ENCODE measurements at regions of chr1 and their contacts with region 1.

Region 1: GRCh38 chr1:44775078-44775929 is at the start of gene RPS8:
- DNase-seq: peak; percentile 96
- H3K4me3 Mint-ChIP-seq: peak within 1 kb of the TSS; percentile 91
- H3K27ac Mint-ChIP-seq: peak within 1 kb of the TSS; percentile 99
- H3K4me1 Mint-ChIP-seq: peaks cover 25% of the 10 kb centered on the region
- H3K27me3 Mint-ChIP-seq: no peaks in the 10 kb centered on the region
- CTCF ChIP-seq: no peak
- total RNA-seq, gene RPS8: 2,454 and 2,713 TPM in 2 replicates

Region 2: GRCh38 chr1:44636688-44637598 is 138.4 kb before region 1 on chr1:
- CTCF ChIA-PET with region 1: no interaction called
- POLR2A ChIA-PET with region 1: no interaction called
- intact Hi-C with region 1: no loop called
- DNase-seq: peak; percentile 15
- H3K4me3 Mint-ChIP-seq: no peak overlapping the region
- H3K27ac Mint-ChIP-seq: no peak overlapping the region
- H3K4me1 Mint-ChIP-seq: peaks cover 8% of the 10 kb centered on the region
- H3K27me3 Mint-ChIP-seq: no peaks in the 10 kb centered on the region
- CTCF ChIP-seq: no peak

Region 3: GRCh38 chr1:44714944-44715571 is 60.2 kb before region 1 on chr1:
- CTCF ChIA-PET with region 1: no interaction called
- POLR2A ChIA-PET with region 1: interaction called, 10 read pairs
- intact Hi-C with region 1: no loop called
- DNase-seq: peak; percentile 77
- H3K4me3 Mint-ChIP-seq: no peak overlapping the region
- H3K27ac Mint-ChIP-seq: no peak overlapping the region
- H3K4me1 Mint-ChIP-seq: peaks cover 7% of the 10 kb centered on the region
- H3K27me3 Mint-ChIP-seq: peaks cover 14% of the 10 kb centered on the region
- CTCF ChIP-seq: peak; percentile 84

Region 4: GRCh38 chr1:44739361-44740178 is 35.7 kb before region 1 on chr1 and contains the start of gene KIF2C:
- CTCF ChIA-PET with region 1: no interaction called
- POLR2A ChIA-PET with region 1: interaction called, 53 read pairs
- intact Hi-C with region 1: loop called (anchors 2 kb)
- DNase-seq: peak; percentile 97
- H3K4me3 Mint-ChIP-seq: peak within 1 kb of the TSS; percentile 90
- H3K27ac Mint-ChIP-seq: peak within 1 kb of the TSS; percentile 93
- H3K4me1 Mint-ChIP-seq: peaks cover 6% of the 10 kb centered on the region
- H3K27me3 Mint-ChIP-seq: no peaks in the 10 kb centered on the region
- CTCF ChIP-seq: no peak
- total RNA-seq, gene KIF2C: 20.8 and 25.1 TPM in 2 replicates

Region 5: DNA sequence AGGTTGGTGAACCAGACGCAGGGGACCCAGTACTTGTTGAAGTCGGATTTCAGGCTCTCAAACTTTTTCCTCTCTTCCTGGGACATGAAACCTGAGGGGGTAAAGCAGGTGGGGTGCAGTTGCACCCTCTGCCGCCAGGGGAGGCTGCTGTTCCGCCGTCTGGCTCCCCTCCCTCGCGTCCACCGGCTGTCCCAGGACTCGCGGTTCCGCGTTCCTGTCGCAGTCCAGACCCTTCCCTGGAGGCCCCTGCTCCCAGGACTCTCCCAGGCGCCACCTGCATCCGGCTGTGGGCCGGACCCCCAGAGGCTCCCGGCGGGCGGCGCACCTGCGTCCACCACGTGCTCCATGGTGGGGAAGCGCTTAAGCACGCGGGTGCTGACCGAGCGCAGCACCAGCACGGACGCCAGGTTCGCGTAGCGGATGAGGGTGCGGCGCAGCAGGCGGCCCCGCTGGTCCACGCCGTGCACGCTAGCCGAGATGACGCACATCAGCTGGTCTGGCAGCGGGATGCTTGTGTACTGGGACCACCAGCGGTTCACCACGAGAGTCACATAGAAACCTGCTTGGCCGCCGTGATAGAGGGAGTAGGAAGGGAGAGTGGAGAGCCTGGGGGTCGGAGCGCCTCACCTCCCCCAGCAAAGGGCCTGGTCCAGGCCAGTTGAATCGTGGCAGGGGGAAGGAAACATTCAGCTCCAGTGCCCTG is 11.0 kb after region 1 on chr1:
- CTCF ChIA-PET with region 1: interaction called, 5 read pairs
- POLR2A ChIA-PET with region 1: interaction called, 36 read pairs
- intact Hi-C with region 1: no loop called
- DNase-seq: peak; percentile 68
- H3K4me3 Mint-ChIP-seq: peak overlapping the region; percentile 58
- H3K27ac Mint-ChIP-seq: peak overlapping the region; percentile 46
- H3K4me1 Mint-ChIP-seq: peaks cover 7% of the 10 kb centered on the region
- H3K27me3 Mint-ChIP-seq: no peaks in the 10 kb centered on the region
- CTCF ChIP-seq: peak; percentile 93

Region 6: GRCh38 chr1:44807262-44808062 is 32.2 kb after region 1 on chr1 and contains the start of gene DYNLT4:
- CTCF ChIA-PET with region 1: interaction called, 3 read pairs
- POLR2A ChIA-PET with region 1: interaction called, 26 read pairs
- intact Hi-C with region 1: loop called (anchors 2 kb)
- DNase-seq: peak; percentile 99
- H3K4me3 Mint-ChIP-seq: peak within 1 kb of the TSS; percentile 52
- H3K27ac Mint-ChIP-seq: peak within 1 kb of the TSS; percentile 100
- H3K4me1 Mint-ChIP-seq: peaks cover 48% of the 10 kb centered on the region
- H3K27me3 Mint-ChIP-seq: no peaks in the 10 kb centered on the region
- CTCF ChIP-seq: no peak
- total RNA-seq, gene DYNLT4: not detected in 2 replicates

Region 7: GRCh38 chr1:44985747-44986359 is 210.5 kb after region 1 on chr1:
- CTCF ChIA-PET with region 1: no interaction called
- POLR2A ChIA-PET with region 1: interaction called, 11 read pairs
- intact Hi-C with region 1: no loop called
- DNase-seq: peak; percentile 8
- H3K4me3 Mint-ChIP-seq: peak overlapping the region; percentile 90
- H3K27ac Mint-ChIP-seq: peak overlapping the region; percentile 40
- H3K4me1 Mint-ChIP-seq: peaks cover 5% of the 10 kb centered on the region
- H3K27me3 Mint-ChIP-seq: no peaks in the 10 kb centered on the region
- CTCF ChIP-seq: no peak

Measured in MCF 10A (cell line).